HCT116 (cell line): ENCODE measurements at regions of chr19 and their contacts with region 1.

Region 1: GRCh38 chr19:8158411-8159074 is 9.2 kb upstream of the FBN3 start:
- DNase-seq: peak; percentile 79
- ATAC-seq: peak; percentile 47
- H3K4me3 ChIP-seq: no peak overlapping the region
- H3K27ac ChIP-seq: no peak overlapping the region
- H3K4me1 ChIP-seq: peaks cover 27 to 28% of the 10 kb centered on the region in 2 experiments
- H3K27me3 ChIP-seq: no peaks in the 10 kb centered on the region
- CTCF ChIP-seq: peak; percentile 63 to 93 (median 77)
- POLR2A ChIP-seq: no peak
- RAD21 ChIP-seq: peak; percentile 92

Region 2: GRCh38 chr19:7868676-7869452 is 289.7 kb before region 1 on chr19:
- CTCF ChIA-PET with region 1: no interaction called
- POLR2A ChIA-PET with region 1: no interaction called
- RAD21 ChIA-PET with region 1: no interaction called
- intact Hi-C with region 1: no loop called
- DNase-seq: peak; percentile 92
- ATAC-seq: peak; percentile 59
- H3K4me3 ChIP-seq: peak overlapping the region; percentile 46 to 58
- H3K27ac ChIP-seq: peak overlapping the region; percentile 86
- H3K4me1 ChIP-seq: peaks cover 26 to 67% of the 10 kb centered on the region in 2 experiments
- H3K27me3 ChIP-seq: no peaks in the 10 kb centered on the region
- CTCF ChIP-seq: peak in 2 of 3 experiments; percentile 63 to 65; a peak in 4 of 6 replicates
- POLR2A ChIP-seq: no peak
- RAD21 ChIP-seq: no peak

Region 3: DNA sequence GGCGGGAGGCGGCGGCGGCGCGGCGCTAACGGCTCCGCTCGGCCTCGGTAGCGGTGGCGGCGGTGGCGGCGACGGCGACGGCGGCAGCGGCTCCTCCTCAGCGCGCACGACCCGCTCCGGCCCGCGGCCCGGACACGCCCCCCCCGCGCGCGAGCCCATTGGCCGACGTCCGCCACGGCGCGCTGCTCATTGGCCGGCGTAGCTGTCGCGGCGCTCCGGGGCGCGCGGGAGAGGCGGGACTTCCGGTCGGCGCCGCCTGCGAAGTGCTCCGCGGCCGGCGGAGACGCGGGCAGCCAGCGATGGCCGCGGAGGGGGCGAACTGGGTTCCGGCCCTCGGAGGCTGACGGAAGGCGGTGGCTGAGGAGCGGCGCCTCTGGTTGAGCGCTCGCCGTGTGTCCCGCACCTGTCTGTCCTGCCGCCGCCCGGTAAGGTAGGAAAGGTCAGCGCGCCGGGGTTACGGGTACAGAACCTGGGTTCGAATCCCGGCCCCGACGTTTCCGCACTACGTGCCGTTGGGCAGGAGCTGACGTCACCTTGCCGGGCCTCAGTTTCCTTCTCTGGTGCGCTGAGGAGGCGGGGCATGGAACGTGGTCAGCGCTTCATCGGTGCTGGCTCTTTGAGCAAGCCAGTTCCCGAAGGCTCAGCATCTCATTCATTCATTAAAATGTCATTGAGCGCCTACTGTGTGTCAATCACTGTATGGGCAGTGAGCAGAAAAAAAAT is 152.8 kb before region 1 on chr19 and contains the start of gene ELAVL1:
- CTCF ChIA-PET with region 1: interaction called, 4 read pairs
- POLR2A ChIA-PET with region 1: no interaction called
- RAD21 ChIA-PET with region 1: no interaction called
- intact Hi-C with region 1: loop called (anchors 10 kb)
- DNase-seq: peak; percentile 73
- ATAC-seq: peak; percentile 83
- H3K4me3 ChIP-seq: peak within 1 kb of the TSS; percentile 87 to 96
- H3K27ac ChIP-seq: peak within 1 kb of the TSS; percentile 68
- H3K4me1 ChIP-seq: peaks cover 21 to 40% of the 10 kb centered on the region in 2 experiments
- H3K27me3 ChIP-seq: no peaks in the 10 kb centered on the region
- CTCF ChIP-seq: no peak
- POLR2A ChIP-seq: peak; percentile 35
- RAD21 ChIP-seq: no peak
- total RNA-seq, gene ELAVL1: 134 TPM

Region 4: DNA sequence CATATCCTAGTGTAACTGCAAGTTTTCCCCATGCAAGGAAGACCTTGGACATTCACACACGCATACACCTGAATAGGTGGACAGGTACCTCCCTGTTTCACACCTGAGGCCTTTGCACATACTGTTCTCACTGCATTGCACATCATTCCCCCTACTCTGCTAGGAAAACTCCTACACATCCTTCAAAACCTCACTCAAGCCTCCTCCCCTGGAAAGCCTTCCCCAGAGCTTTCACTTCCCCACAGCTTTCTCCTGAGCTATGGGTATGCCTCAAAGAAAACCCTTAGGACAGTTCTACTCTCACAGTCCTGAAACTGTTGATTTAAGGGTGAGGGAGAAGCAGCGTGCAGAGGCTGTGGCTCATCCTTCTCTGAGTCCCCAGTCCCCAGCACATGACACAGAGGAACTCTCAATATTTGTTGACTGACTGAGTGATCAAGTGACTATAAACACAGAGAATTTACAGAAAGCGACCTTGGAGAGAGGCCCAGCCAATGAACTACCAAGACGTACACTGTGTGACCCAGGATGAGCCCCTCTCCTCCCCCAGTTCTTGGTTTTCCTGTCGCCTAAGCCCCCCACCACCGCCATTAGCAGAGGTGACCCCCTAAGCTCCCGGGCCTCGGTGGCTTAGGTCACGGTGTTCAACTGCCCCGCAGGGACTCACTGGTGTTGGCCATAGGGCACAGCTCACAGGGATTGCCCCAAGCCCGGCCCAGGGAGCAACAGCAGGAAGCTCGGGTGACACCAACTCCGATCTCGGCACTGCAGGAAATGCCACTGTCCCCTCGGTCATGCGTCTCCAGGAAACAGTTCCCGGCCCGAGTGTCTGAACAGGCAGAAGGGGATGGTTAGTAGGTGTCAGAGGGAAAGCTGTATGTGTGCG is 49.7 kb before region 1 on chr19:
- CTCF ChIA-PET with region 1: no interaction called
- POLR2A ChIA-PET with region 1: no interaction called
- RAD21 ChIA-PET with region 1: no interaction called
- intact Hi-C with region 1: no loop called
- DNase-seq: no peak
- ATAC-seq: no peak
- H3K4me3 ChIP-seq: no peak overlapping the region
- H3K27ac ChIP-seq: no peak overlapping the region
- H3K4me1 ChIP-seq: no peaks in the 10 kb centered on the region
- H3K27me3 ChIP-seq: no peaks in the 10 kb centered on the region
- CTCF ChIP-seq: no peak
- POLR2A ChIP-seq: no peak
- RAD21 ChIP-seq: no peak

Region 5: GRCh38 chr19:8233370-8233769 is 74.8 kb after region 1 on chr19:
- CTCF ChIA-PET with region 1: no interaction called
- POLR2A ChIA-PET with region 1: no interaction called
- RAD21 ChIA-PET with region 1: no interaction called
- intact Hi-C with region 1: no loop called
- DNase-seq: no peak
- ATAC-seq: no peak
- H3K4me3 ChIP-seq: no peak overlapping the region
- H3K27ac ChIP-seq: no peak overlapping the region
- H3K4me1 ChIP-seq: no peaks in the 10 kb centered on the region
- H3K27me3 ChIP-seq: no peaks in the 10 kb centered on the region
- CTCF ChIP-seq: no peak
- POLR2A ChIP-seq: no peak
- RAD21 ChIP-seq: no peak

Region 6: DNA sequence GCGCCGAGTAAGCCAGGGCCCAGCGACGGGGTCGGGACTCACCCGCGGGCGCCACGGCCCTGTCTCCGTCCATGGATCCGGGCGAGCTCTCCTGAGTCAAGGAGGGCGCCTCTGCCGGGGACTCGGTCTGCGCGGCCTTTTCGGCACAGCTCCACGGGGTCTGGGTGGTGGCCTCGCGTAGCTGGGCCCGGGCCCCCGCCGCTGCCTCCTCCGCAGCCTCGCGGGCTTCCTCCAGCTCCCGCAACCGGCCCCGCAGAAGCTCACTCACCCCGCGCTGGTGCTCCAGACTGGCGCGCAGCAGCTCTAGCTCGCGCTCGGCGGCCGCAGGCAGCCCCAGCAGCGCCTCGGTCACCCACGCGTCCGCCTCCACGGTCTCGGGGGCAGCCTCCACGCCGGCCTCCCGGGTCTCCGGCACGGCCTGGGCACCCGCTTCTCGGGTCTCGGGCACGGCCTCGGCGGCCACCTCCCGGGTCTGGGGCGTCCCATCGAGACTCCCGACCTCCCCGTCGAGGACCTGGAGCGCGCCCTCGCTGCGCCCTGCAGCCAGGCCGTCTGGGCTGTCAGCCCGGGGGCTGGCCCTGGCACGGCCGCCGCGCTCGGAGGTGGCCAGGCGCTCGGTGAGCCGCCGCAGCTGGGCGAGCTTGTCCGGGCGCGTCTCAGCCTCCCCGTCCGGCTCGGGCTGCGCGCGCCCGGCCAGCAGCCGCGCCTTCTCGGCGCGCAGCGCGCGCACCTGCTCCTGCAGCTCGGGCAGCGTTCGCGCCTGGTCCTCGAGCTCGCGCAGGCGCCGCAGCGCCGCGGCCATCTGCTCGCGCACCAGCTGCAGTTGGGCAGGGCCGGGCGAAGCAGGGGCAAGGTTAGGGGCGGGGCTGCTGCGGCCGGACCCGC is 176.2 kb after region 1 on chr19:
- CTCF ChIA-PET with region 1: no interaction called
- POLR2A ChIA-PET with region 1: no interaction called
- RAD21 ChIA-PET with region 1: no interaction called
- intact Hi-C with region 1: loop called (anchors 10 kb)
- DNase-seq: peak; percentile 82
- ATAC-seq: peak; percentile 83
- H3K4me3 ChIP-seq: peak overlapping the region; percentile 71 to 82
- H3K27ac ChIP-seq: peak overlapping the region; percentile 100
- H3K4me1 ChIP-seq: peaks cover 18 to 31% of the 10 kb centered on the region in 2 experiments
- H3K27me3 ChIP-seq: no peaks in the 10 kb centered on the region
- CTCF ChIP-seq: no peak
- POLR2A ChIP-seq: peak; percentile 56
- RAD21 ChIP-seq: no peak